Thyroid gland (tissue), 4 donors: ENCODE measurements at regions of chr9 and their contacts with region 1.

Region 1: DNA sequence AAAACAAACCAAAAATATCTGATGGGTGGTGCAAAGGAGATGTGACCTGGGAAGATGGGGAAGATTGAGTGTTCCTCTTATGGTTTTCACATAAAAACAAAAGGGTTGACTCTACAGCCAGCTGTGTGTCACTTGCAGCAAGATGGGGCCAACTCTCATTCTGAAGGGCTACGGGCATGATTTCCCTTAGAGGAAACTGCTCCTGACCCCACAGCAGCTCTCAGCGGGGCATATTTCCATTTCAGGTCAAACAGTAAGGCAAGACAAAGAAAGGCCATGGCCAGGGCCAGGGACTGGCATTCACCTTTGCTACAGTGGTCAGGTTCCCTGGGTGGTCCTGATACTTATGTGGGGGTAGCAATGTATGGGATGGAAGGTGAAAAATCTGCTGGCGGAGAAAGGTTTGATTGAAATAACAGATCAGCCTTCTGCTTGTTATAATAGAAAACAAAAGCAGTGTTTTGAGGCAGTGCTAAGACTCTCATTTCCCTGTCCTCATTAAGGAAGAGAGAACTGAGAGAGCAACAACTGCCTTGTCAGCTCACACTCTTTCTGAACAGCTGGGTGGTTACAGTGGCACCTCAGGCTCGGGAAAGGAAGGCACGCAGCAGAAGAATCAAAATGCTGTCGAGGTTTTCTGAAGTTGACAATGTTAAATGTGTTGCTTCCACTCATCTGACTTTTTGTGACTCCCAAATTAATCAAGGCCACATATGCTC is 120.7 kb upstream of the PCA3 start:
- DNase-seq: no peak
- H3K4me3 ChIP-seq: no peak overlapping the region
- H3K27ac ChIP-seq: peak overlapping the region; percentile 53 to 78 (median 75)
- H3K4me1 ChIP-seq: peaks cover 22 to 32% of the 10 kb centered on the region in 2 donors
- H3K27me3 ChIP-seq: no peaks in the 10 kb centered on the region
- CTCF ChIP-seq: no peak
- POLR2A ChIP-seq: no peak

Region 2: GRCh38 chr9:76302947-76303940 is 340.3 kb before region 1 on chr9:
- intact Hi-C with region 1: no loop called
- DNase-seq: peak; percentile 18 to 21
- H3K4me3 ChIP-seq: no peak overlapping the region
- H3K27ac ChIP-seq: no peak overlapping the region
- H3K4me1 ChIP-seq: peaks cover 0 to 4% of the 10 kb centered on the region in 2 donors
- H3K27me3 ChIP-seq: no peaks in the 10 kb centered on the region
- CTCF ChIP-seq: peak; percentile 53 to 80 (median 65)
- POLR2A ChIP-seq: no peak

Region 3: GRCh38 chr9:76458903-76459690 is 184.5 kb before region 1 on chr9 and contains the start of gene GCNT1:
- intact Hi-C with region 1: loop called (anchors 5 kb)
- DNase-seq: peak; percentile 93 to 96
- H3K4me3 ChIP-seq: peak within 1 kb of the TSS; percentile 35 to 65 (median 55)
- H3K27ac ChIP-seq: peak within 1 kb of the TSS; percentile 39 to 83 (median 74)
- H3K4me1 ChIP-seq: peaks cover 13 to 27% of the 10 kb centered on the region in 2 donors
- H3K27me3 ChIP-seq: no peaks in the 10 kb centered on the region
- CTCF ChIP-seq: peak; percentile 12 to 80 (median 54)
- POLR2A ChIP-seq: peak in 1 of 2 donors; percentile 94
- total RNA-seq, gene GCNT1: 15.4 to 340 (median 30.9) TPM